AG04449 (cell line): ENCODE measurements at regions of chr7 and their contacts with region 1.

Region 1: GRCh38 chr7:33932832-33933468 is 27.6 kb downstream of the BMPER start:
- DNase-seq: peak; percentile 52
- H3K4me3 ChIP-seq: peak overlapping the region; percentile 10; the same call in 1 of the 2 replicates
- CTCF ChIP-seq: peak; percentile 93

Region 2: DNA sequence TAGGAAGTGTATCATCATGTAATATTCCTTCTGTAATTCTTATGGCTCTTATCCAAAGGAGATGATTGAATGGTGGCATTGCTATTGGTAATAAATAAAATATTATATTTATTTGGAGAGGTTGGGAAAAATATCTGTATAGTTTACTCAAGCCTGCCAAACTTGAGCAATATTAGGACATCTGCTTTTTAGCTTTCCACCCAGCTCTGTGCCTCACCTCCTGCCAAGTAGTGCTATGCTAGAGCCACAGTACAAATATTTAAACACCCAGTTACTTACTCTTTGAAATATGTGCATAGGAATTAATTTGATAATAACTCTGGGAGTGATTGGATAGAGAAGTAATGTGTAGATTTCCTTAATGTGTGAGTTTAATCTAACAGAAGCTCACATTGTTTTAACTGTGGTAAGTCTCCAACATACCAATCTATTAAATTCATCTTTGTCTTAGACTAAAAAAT is 674.4 kb before region 1 on chr7:
- CTCF ChIA-PET with region 1: interaction called, 10 read pairs
- POLR2A ChIA-PET with region 1: no interaction called
- DNase-seq: peak; percentile 66
- H3K4me3 ChIP-seq: no peak overlapping the region
- CTCF ChIP-seq: no peak

Region 3: GRCh38 chr7:33707427-33707826 is 225.5 kb before region 1 on chr7:
- CTCF ChIA-PET with region 1: interaction called, 10 read pairs
- POLR2A ChIA-PET with region 1: no interaction called
- DNase-seq: no peak
- H3K4me3 ChIP-seq: no peak overlapping the region
- CTCF ChIP-seq: no peak

Region 4: DNA sequence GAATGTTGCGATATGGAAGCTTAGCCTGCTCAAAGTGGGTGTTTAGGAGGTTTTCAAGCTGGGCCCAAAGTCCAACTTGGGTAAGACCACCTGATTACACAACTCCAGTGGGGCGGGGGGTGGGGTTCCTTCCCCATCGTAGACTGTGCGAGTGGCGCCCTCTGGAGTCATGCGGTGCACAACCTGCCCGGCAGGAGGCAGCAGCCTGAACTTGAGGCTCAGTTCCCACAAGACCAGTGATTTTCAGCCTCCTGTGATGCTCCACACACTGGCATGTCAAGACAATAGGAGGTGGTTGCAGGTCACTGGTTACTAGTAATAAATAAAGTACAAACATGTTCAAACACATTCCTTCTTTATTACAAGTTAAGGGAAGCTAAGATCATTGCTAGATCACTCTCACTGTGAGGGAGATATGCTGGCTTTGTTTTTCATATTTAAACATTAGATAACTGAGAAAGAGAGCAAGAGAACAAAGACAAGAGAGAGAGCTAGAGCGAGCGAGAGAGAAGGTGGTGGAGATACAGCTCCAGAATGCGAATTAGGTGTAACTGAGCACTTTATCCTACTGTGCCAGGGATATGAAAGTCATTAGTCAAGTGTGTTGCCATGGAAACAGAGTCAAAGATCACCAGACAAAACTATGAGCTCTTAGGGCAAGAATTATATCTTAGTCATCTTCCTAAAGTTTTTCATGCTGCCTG is 125.0 kb before region 1 on chr7:
- CTCF ChIA-PET with region 1: interaction called, 10 read pairs
- POLR2A ChIA-PET with region 1: no interaction called
- DNase-seq: peak; percentile 62
- H3K4me3 ChIP-seq: no peak overlapping the region
- CTCF ChIP-seq: peak; percentile 62

Region 5: DNA sequence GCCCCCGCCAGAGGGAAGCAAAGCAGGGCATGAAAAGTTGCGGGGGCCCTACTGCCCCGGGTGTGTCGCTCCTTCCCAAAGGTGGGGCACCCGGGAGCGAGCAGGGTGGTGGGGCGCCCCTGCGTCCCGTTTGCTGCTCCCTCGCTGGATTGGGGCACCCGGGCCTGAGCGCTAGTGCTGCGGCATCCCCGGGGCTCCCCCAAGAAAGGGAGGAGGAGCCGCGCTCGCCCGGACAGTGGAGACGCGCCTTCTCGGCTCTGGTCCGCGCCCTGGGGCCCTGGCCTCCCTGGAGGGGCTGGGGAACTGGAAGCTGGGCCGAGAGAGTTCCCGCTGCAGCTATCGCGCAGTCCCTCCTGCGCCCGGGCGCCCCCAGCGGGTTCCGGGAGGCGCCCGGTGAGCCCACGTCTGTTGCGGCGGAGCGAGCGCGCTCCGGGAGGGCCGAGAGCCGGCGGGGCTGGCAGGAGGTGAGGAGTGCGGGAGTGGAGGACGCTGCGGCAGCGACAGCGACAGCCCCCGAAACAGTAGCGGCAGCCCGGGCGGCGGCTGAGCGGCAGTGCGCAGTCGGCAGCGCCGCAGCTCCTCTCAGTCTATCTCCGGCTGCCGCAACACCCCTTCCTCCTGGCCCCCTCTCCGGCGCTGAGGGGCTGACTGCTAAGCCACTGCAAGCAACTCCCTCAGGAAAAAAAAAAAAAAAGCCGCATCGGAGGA is 28.1 kb before region 1 on chr7:
- CTCF ChIA-PET with region 1: interaction called, 46 read pairs
- POLR2A ChIA-PET with region 1: interaction called, 5 read pairs
- DNase-seq: no peak
- H3K4me3 ChIP-seq: peak overlapping the region; percentile 68
- CTCF ChIP-seq: peak; percentile 47

Region 6: GRCh38 chr7:33952824-33953223 is 19.9 kb after region 1 on chr7:
- CTCF ChIA-PET with region 1: interaction called, 61 read pairs
- POLR2A ChIA-PET with region 1: interaction called, 5 read pairs
- DNase-seq: peak; percentile 63
- H3K4me3 ChIP-seq: no peak overlapping the region
- CTCF ChIP-seq: no peak